Activated CD4-positive, alpha-beta T cell treated with anti-CD3 and anti-CD28 coated beads for 36 hours (primary cell): ENCODE measurements at regions of chr12 and their contacts with region 1.

Region 1: DNA sequence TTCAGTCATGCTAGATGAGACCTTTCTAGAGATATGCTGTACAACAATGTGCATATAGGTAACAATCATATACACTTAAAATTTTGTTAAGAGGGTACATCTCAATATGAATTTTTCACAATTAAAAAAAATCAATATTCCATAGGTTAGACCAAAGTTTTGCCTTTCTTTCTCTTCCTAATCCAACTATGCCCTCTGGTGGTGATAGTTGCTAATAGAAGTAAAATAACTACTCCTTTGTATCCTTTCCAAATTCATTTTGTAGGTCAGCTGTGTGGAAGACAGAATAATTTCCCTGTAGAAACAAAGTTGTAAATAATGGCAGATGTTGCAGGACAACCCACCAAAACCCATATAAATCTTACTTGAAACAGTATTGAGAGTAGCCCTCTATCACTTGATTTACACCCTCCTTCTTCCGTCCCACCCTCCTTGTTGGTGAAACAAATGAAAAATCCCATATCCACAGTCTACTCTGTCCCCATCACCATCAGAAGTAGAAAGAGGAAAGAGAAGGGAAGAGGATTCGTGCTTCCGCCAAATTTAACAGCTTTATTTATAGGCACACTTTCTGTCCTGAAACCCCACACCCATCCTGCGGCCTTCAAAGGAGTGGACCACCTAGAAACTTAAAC is 34.2 kb upstream of the KICS2 start:
- DNase-seq: no peak
- ATAC-seq: no peak
- H3K4me3 Mint-ChIP-seq: no peak overlapping the region
- H3K27ac Mint-ChIP-seq: no peak overlapping the region
- H3K4me1 Mint-ChIP-seq: no peaks in the 10 kb centered on the region
- H3K27me3 Mint-ChIP-seq: no peaks in the 10 kb centered on the region

Region 2: DNA sequence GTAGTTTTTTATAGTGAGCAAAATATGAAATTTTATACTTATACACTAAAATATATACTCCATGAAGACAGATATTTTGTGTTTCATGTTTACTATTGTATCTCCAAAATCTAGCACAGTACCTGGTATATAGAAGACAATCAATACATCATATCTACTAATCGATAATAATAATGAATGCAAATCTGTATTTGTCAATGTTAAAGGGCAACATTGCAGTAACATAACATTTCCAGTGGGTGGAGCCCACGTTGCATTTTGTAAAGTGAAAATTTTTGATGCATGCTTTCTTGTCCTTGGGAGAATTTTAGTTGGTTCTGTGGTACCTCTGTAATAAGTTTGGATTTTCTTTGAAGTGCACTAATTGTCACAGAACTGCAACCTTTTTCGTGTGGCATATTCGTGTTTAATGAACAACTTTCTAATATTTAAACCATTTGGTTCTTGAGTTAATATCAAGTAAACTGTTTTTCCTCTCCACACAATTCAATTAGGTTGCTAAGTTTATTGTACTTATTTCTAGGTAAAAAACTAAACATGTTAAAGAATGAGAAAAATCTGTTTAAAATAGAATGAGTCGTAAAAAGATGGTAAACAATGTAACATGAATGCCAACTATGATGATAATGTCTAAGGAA is 1152.7 kb before region 1 on chr12:
- CTCF ChIA-PET with region 1: no interaction called
- POLR2A ChIA-PET with region 1: no interaction called
- intact Hi-C with region 1: loop called (anchors 2 to 5 kb)
- DNase-seq: peak; percentile 25
- ATAC-seq: no peak
- H3K4me3 Mint-ChIP-seq: no peak overlapping the region
- H3K27ac Mint-ChIP-seq: no peak overlapping the region
- H3K4me1 Mint-ChIP-seq: no peaks in the 10 kb centered on the region
- H3K27me3 Mint-ChIP-seq: peaks cover 4% of the 10 kb centered on the region

Region 3: GRCh38 chr12:63420206-63420644 is 836.1 kb before region 1 on chr12:
- CTCF ChIA-PET with region 1: no interaction called
- POLR2A ChIA-PET with region 1: no interaction called
- intact Hi-C with region 1: loop called in 1 of 2 experiments (anchors 5 kb)
- DNase-seq: peak; percentile 67
- ATAC-seq: peak; percentile 49
- H3K4me3 Mint-ChIP-seq: no peak overlapping the region
- H3K27ac Mint-ChIP-seq: no peak overlapping the region
- H3K4me1 Mint-ChIP-seq: no peaks in the 10 kb centered on the region
- H3K27me3 Mint-ChIP-seq: peaks cover 1% of the 10 kb centered on the region

Region 4: GRCh38 chr12:63668028-63668799 is 588.1 kb before region 1 on chr12 and contains the start of gene DPY19L2:
- CTCF ChIA-PET with region 1: no interaction called
- POLR2A ChIA-PET with region 1: no interaction called
- intact Hi-C with region 1: loop called (anchors 2 to 10 kb)
- DNase-seq: peak; percentile 50
- ATAC-seq: peak; percentile 80
- H3K4me3 Mint-ChIP-seq: peak within 1 kb of the TSS; percentile 67
- H3K27ac Mint-ChIP-seq: no peak within 1 kb of the TSS
- H3K4me1 Mint-ChIP-seq: peaks cover 9% of the 10 kb centered on the region
- H3K27me3 Mint-ChIP-seq: peaks cover 32% of the 10 kb centered on the region
- total RNA-seq, gene DPY19L2: 0.21 to 0.70 TPM

Region 5: GRCh38 chr12:63826006-63826585 is 430.2 kb before region 1 on chr12:
- CTCF ChIA-PET with region 1: interaction called, 3 read pairs
- POLR2A ChIA-PET with region 1: no interaction called
- intact Hi-C with region 1: loop called in 1 of 2 experiments (anchors 1 kb)
- DNase-seq: no peak
- ATAC-seq: no peak
- H3K4me3 Mint-ChIP-seq: no peak overlapping the region
- H3K27ac Mint-ChIP-seq: no peak overlapping the region
- H3K4me1 Mint-ChIP-seq: peaks cover 6% of the 10 kb centered on the region
- H3K27me3 Mint-ChIP-seq: peaks cover 20% of the 10 kb centered on the region

Region 6: DNA sequence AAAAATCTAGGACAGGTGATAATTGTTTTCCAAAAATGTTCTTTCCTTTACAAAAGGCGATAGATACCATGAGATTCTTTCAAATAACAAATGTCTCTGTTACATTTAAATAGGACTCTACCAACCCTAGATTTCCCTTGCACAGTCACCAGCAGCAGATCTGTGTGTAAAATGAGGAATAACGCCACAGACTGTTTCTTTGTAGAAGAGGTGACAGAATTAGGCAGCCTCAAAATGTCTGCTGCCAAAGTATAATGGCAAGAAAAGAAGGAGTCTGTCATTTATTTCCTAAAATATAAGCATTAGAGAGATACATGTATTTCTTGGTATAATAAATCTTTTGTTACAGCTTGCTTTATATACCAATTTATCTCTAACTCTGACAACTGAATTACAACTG is 420.2 kb before region 1 on chr12:
- CTCF ChIA-PET with region 1: interaction called, 6 read pairs
- POLR2A ChIA-PET with region 1: no interaction called
- intact Hi-C with region 1: loop called (anchors 1 to 2 kb)
- DNase-seq: no peak
- ATAC-seq: no peak
- H3K4me3 Mint-ChIP-seq: no peak overlapping the region
- H3K27ac Mint-ChIP-seq: no peak overlapping the region
- H3K4me1 Mint-ChIP-seq: no peaks in the 10 kb centered on the region
- H3K27me3 Mint-ChIP-seq: peaks cover 4% of the 10 kb centered on the region

Region 7: GRCh38 chr12:63843721-63844390 is 412.4 kb before region 1 on chr12:
- CTCF ChIA-PET with region 1: interaction called, 8 read pairs
- POLR2A ChIA-PET with region 1: no interaction called
- intact Hi-C with region 1: loop called (anchors 1 kb)
- DNase-seq: peak; percentile 89
- ATAC-seq: peak; percentile 97
- H3K4me3 Mint-ChIP-seq: peak overlapping the region; percentile 54
- H3K27ac Mint-ChIP-seq: no peak overlapping the region
- H3K4me1 Mint-ChIP-seq: peaks cover 8% of the 10 kb centered on the region
- H3K27me3 Mint-ChIP-seq: peaks cover 26% of the 10 kb centered on the region